Activated CD4-positive, alpha-beta T cell treated with anti-CD3 and anti-CD28 coated beads, Interleukin-2, amount 10 ng/mL, durations not matched to agents 7 days and 5 days (primary cell): ENCODE measurements at regions of chr7 and their contacts with region 1.

Region 1: DNA sequence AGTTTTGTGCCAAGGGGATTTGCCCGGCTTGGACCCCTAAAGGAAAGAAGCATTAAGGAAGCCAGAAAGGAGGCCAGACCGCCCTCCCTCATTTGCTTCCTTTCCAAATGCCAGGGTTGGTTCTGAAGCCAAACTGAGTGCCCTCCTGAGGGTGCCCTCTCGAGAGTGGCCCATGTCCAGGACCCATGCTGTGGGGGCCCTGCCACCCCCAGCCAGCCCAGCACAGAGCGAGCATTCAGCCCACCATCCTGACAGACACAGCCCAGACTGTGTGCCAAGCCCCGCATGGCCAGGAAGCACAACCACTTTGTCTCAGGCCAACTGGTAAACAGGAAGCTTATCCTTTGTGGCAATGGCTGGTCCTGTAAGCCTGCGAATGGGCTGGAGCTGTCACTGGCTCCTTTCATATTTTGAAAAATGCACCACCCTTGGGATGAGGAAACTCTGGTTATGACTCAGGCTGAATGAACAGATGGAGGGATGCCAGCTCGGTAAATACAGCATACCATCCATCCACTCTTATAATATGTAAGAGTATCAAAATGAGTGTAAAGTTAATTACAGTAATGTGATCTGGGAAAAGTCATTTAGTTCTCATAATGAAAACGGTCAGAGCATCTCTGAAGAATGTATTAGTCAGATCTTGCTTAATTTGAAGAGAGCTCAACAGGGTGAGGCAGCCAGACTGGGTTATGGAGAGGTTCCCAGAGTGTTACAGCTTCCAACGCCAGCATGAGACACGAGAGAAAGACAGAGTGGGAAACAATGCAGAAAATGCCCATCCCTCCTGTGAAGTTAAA is 65.0 kb downstream of the STK17A start:
- DNase-seq: peak; percentile 42
- H3K4me3 Mint-ChIP-seq: peak overlapping the region; percentile 84
- H3K27ac Mint-ChIP-seq: peak overlapping the region; percentile 97
- H3K4me1 Mint-ChIP-seq: peaks cover 95% of the 10 kb centered on the region
- H3K27me3 Mint-ChIP-seq: no peaks in the 10 kb centered on the region

Region 2: DNA sequence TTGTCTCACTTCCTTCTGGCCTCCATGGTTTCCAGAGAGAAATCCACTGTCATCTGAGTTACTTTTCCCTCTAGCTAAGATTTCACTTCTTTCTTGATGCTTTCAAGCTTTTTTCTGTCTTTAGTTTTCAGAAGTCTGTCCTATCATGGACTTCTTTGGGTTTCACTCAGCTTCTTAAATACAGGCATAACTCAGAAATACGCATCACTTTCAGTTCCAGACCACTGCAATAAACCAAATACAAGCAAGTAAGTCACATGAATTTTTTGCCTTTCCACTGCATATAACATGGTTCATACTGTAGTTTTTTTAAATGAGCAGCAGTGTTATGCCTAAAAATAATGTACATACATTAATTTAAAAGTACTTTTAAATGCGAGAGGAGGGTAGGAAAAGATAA is 16.3 kb before region 1 on chr7:
- CTCF ChIA-PET with region 1: no interaction called
- POLR2A ChIA-PET with region 1: no interaction called
- DNase-seq: no peak
- H3K4me3 Mint-ChIP-seq: no peak overlapping the region
- H3K27ac Mint-ChIP-seq: peak overlapping the region; percentile 79
- H3K4me1 Mint-ChIP-seq: peaks cover 84% of the 10 kb centered on the region
- H3K27me3 Mint-ChIP-seq: no peaks in the 10 kb centered on the region

Region 3: GRCh38 chr7:43669286-43670081 is 21.6 kb after region 1 on chr7:
- CTCF ChIA-PET with region 1: interaction called, 13 read pairs
- POLR2A ChIA-PET with region 1: no interaction called
- DNase-seq: peak; percentile 33
- H3K4me3 Mint-ChIP-seq: peak overlapping the region; percentile 51
- H3K27ac Mint-ChIP-seq: peak overlapping the region; percentile 83
- H3K4me1 Mint-ChIP-seq: peaks cover 55% of the 10 kb centered on the region
- H3K27me3 Mint-ChIP-seq: no peaks in the 10 kb centered on the region

Region 4: DNA sequence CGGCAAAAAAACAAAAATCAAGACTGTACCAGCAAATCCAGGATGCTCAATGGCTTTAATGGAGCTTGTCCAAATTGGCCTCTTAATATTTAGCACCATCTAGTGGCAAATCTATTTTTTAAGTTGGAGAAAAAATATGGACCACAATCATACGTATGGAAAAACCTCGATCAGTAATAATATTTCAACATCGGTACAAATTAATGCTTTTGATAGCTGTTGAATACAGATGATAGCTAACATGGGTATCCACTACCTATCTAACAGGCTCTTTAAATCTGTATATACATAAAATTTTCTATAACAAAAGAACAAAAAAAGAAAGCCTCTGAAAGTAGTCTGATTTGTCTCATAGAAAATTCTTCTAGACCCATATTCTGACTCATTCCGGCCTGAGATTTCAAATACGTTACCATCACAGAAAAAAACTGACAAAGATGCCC is 52.2 kb after region 1 on chr7:
- CTCF ChIA-PET with region 1: interaction called, 16 read pairs
- POLR2A ChIA-PET with region 1: interaction called, 5 read pairs
- DNase-seq: no peak
- H3K4me3 Mint-ChIP-seq: no peak overlapping the region
- H3K27ac Mint-ChIP-seq: no peak overlapping the region
- H3K4me1 Mint-ChIP-seq: peaks cover 62% of the 10 kb centered on the region
- H3K27me3 Mint-ChIP-seq: no peaks in the 10 kb centered on the region